B cell (primary cell): ENCODE measurements at regions of chr1 and their contacts with region 1.

Region 1: GRCh38 chr1:157734321-157734720 is 33.8 kb upstream of the FCRL3 start:
- DNase-seq: peak; percentile 55
- ATAC-seq: peak; percentile 79
- H3K4me3 ChIP-seq: no peak overlapping the region
- H3K4me3 Mint-ChIP-seq: peak overlapping the region; percentile 66
- H3K27ac ChIP-seq: peak overlapping the region; percentile 65 to 83
- H3K27ac Mint-ChIP-seq: peak overlapping the region; percentile 89
- H3K4me1 ChIP-seq: peaks cover 51 to 55% of the 10 kb centered on the region in 2 donors
- H3K4me1 Mint-ChIP-seq: peaks cover 76% of the 10 kb centered on the region
- H3K27me3 ChIP-seq: no peaks in the 10 kb centered on the region
- H3K27me3 Mint-ChIP-seq: no peaks in the 10 kb centered on the region
- CTCF ChIP-seq: no peak

Region 2: GRCh38 chr1:157551694-157552637 is 182.4 kb before region 1 on chr1 and contains the start of gene FCRL5:
- CTCF ChIA-PET with region 1: no interaction called
- POLR2A ChIA-PET with region 1: no interaction called
- intact Hi-C with region 1: no loop called
- DNase-seq: peak; percentile 69
- ATAC-seq: peak; percentile 82
- H3K4me3 ChIP-seq: peak within 1 kb of the TSS; percentile 49 to 85 (median 71)
- H3K4me3 Mint-ChIP-seq: peak within 1 kb of the TSS; percentile 91
- H3K27ac ChIP-seq: peak within 1 kb of the TSS; percentile 42 to 78
- H3K27ac Mint-ChIP-seq: peak within 1 kb of the TSS; percentile 89
- H3K4me1 ChIP-seq: peaks cover 27 to 29% of the 10 kb centered on the region in 2 donors
- H3K4me1 Mint-ChIP-seq: peaks cover 63% of the 10 kb centered on the region
- H3K27me3 ChIP-seq: no peaks in the 10 kb centered on the region
- H3K27me3 Mint-ChIP-seq: no peaks in the 10 kb centered on the region
- CTCF ChIP-seq: no peak
- total RNA-seq, gene FCRL5: 34.0 and 35.0 TPM in 2 replicates

Region 3: DNA sequence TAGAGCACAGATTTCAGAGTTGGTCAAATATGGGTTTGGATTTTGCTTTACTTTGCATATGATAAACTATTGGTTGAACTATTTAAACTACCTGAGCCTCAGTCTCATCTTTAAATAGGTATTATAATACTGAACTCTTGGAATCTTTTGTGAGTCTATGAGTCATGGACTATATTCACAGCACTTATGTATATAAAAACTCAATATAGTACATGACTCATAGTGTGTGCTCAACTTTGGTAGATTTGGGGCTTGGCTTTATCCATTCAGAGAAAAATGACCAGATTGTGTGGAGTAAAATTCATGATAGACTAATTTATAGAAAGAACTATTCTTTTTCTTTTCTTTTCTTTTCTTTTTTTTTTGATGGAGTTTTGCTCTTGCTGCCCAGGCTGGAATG is 62.4 kb before region 1 on chr1:
- CTCF ChIA-PET with region 1: no interaction called
- POLR2A ChIA-PET with region 1: no interaction called
- intact Hi-C with region 1: no loop called
- DNase-seq: no peak
- ATAC-seq: no peak
- H3K4me3 ChIP-seq: no peak overlapping the region
- H3K4me3 Mint-ChIP-seq: no peak overlapping the region
- H3K27ac ChIP-seq: no peak overlapping the region
- H3K27ac Mint-ChIP-seq: no peak overlapping the region
- H3K4me1 ChIP-seq: no peaks in the 10 kb centered on the region
- H3K4me1 Mint-ChIP-seq: no peaks in the 10 kb centered on the region
- H3K27me3 ChIP-seq: no peaks in the 10 kb centered on the region
- H3K27me3 Mint-ChIP-seq: no peaks in the 10 kb centered on the region
- CTCF ChIP-seq: no peak

Region 4: DNA sequence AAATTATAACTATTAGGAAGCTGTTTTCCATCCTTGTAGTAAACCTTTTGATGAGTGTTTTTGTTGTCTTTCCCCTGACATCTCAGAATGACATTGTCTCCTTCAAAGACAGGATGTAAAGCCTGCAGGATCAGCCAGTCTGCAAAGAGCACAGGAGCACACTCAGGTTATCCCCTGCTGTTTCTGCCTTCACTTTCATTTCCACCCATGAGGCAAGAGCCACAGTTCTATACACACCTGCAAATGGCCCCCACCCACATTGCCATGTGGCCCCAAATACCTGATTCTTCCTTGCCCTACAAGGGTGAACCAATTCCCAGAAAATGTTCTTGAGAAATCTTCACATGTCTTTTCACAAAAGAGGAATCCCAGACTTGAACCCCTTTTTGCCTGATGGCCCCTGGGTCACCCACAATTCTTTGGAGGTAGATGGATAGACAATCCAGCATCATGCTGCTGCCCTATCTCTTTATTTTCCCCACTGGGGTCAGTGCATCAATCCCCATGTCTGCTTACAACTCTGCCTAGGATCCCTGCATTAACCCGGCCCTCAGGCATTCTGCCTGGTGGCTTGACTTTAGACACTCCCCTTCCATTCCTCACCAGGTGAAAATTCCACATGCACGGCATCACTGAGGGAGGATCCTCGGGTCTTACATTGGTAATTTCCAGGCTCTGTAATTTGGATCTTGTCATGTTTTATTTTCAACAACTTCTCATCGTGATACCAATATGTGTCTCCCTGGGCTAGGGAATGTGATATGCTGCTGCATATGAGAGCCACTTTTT is 36.3 kb before region 1 on chr1:
- CTCF ChIA-PET with region 1: no interaction called
- POLR2A ChIA-PET with region 1: no interaction called
- intact Hi-C with region 1: loop called (anchors 5 kb)
- DNase-seq: peak; percentile 51
- ATAC-seq: peak; percentile 34
- H3K4me3 ChIP-seq: peak overlapping the region in 3 of 5 experiments; percentile 35 to 73 (median 65)
- H3K4me3 Mint-ChIP-seq: peak overlapping the region; percentile 71
- H3K27ac ChIP-seq: peak overlapping the region; percentile 75 to 86
- H3K27ac Mint-ChIP-seq: peak overlapping the region; percentile 90
- H3K4me1 ChIP-seq: peaks cover 88 to 90% of the 10 kb centered on the region in 2 donors
- H3K4me1 Mint-ChIP-seq: peaks cover 93% of the 10 kb centered on the region
- H3K27me3 ChIP-seq: no peaks in the 10 kb centered on the region
- H3K27me3 Mint-ChIP-seq: no peaks in the 10 kb centered on the region
- CTCF ChIP-seq: no peak